ENCODE measurements at regions of chr1 and their contacts with region 1.

Region 1: DNA sequence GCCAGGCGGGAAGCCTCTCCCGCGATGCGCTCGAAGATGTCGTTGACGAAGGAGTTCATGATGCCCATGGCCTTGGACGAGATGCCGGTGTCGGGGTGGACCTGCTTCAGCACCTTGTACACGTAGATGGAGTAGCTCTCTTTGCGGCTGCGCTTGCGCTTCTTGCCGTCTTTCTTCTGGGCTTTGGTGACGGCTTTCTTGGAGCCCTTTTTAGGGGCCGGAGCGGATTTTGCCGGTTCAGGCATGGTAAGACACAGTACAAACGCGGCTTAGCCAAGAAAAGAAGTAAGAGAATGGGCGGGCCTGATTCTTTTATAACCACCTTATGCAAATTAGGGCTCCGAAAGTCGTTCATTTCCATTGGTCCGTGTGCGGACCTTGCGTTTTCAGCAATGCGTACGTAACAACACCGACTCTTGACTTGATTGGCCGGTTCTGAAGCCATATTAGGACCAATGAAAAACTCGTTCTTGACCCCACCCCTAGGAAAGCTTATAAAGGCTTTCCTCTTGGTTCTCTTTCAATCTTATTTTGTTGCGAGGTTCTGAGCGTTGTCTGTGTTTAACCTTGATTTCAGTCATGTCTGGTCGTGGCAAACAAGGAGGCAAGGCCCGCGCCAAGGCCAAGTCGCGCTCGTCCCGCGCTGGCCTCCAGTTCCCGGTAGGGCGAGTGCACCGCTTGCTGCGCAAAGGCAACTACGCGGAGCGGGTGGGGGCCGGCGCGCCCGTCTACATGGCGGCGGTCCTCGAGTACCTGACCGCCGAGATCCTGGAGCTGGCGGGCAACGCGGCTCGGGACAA is 12.8 kb upstream of the BOLA1 start:
- DNase-seq: peak; percentile 99
- H3K4me3 ChIP-seq: peak overlapping the region; percentile 58 to 68 (median 66)
- H3K27ac ChIP-seq: peak overlapping the region; percentile 75
- H3K4me1 ChIP-seq: peaks cover 14% of the 10 kb centered on the region
- H3K27me3 ChIP-seq: no peaks in the 10 kb centered on the region
- CTCF ChIP-seq: no peak

Region 2: GRCh38 chr1:149927503-149928387 is 41.1 kb after region 1 on chr1 and contains the start of gene SF3B4:
- CTCF ChIA-PET with region 1: no interaction called
- dilution Hi-C with region 1: no loop called
- in situ Hi-C with region 1: no loop called
- intact Hi-C with region 1: loop called (anchors 1 kb)
- DNase-seq: peak; percentile 91
- H3K4me3 ChIP-seq: peak within 1 kb of the TSS; percentile 78 to 92 (median 92)
- H3K27ac ChIP-seq: peak within 1 kb of the TSS; percentile 88
- H3K4me1 ChIP-seq: peaks cover 32% of the 10 kb centered on the region
- H3K27me3 ChIP-seq: no peaks in the 10 kb centered on the region
- CTCF ChIP-seq: no peak
- total RNA-seq, gene SF3B4: 14.2 to 68.8 TPM

Region 3: DNA sequence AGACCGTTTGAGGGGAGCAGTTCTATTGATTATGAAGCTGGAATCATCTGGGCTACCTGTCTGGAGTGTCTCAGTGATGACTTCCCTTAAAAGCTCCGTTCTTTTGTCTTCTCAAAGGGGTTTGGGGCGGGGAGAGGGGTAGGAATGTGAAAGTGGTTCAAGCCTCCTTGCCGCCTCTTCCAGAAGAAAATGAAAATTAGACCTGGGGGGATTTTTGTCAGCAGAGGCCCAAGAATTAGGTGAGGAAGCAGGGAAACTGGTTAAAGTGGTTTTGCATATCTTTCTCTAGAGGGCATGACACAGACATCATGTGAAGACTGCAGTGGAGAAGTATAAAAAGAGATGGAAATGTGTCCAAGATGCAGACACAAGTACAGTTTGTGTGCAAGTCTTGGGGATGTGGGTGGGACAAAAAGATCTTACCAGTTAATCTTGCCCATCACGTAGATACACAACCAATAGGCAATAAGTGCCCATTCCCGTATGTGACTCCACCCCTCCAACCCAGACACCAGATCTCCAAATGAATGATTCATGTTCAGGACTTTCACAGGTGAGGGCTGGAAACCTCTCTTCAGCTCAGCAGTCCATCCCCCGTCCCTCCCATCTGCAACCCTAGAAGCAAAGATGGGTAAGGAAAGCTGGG is 50.6 kb after region 1 on chr1:
- CTCF ChIA-PET with region 1: no interaction called
- dilution Hi-C with region 1: no loop called
- in situ Hi-C with region 1: no loop called
- intact Hi-C with region 1: loop called (anchors 1 kb)
- DNase-seq: peak; percentile 95
- H3K4me3 ChIP-seq: peak overlapping the region; percentile 55 to 88 (median 57)
- H3K27ac ChIP-seq: peak overlapping the region; percentile 74
- H3K4me1 ChIP-seq: peaks cover 35% of the 10 kb centered on the region
- H3K27me3 ChIP-seq: no peaks in the 10 kb centered on the region
- CTCF ChIP-seq: peak in 1 of 2 donors; percentile 21

Region 4: DNA sequence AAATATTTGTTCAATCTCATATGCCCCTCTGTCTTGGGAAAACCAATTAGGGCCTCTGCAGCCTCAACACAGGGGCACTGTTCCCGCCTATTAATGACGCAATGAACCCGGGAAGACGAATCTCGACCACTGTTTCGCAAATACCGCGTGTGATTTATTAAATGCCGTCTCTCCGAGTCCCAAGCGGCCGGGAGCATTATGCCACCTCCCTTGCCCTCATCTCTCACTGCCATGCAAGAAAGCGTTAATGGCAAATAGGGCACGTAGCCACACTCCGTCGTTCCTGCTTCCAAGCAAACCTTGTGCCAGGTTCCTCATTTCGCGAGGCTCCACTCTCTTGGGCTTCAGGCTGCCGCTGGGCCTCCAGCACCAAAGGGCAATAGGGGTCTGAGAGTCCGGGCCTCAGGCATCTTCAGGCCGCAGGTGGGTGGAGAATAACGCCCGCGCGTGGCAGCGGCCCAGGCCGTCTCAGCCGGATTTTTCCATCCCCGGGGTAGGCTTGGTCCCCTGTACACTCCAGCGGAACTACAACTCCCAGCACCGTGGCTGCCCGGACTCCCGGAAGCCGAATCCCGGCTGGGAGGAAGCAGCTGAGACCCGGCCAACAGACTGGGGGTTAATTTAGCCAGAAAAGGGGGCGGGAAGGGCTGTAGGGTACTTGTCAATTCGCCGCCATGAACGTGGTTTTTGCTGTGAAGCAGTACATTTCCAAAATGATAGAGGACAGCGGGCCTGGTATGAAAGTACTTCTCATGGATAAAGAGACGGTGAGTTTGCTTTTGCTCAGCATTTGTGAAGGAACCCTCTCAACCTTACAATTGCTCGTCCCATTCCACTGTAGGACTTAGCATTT is 180.8 kb after region 1 on chr1 and contains the start of gene VPS45:
- CTCF ChIA-PET with region 1: no interaction called
- dilution Hi-C with region 1: loop called (anchors 25 kb)
- in situ Hi-C with region 1: no loop called
- intact Hi-C with region 1: no loop called
- DNase-seq: peak; percentile 86
- H3K4me3 ChIP-seq: peak within 1 kb of the TSS; percentile 68 to 81 (median 73)
- H3K27ac ChIP-seq: peak within 1 kb of the TSS; percentile 83
- H3K4me1 ChIP-seq: peaks cover 15% of the 10 kb centered on the region
- H3K27me3 ChIP-seq: no peaks in the 10 kb centered on the region
- CTCF ChIP-seq: no peak
- total RNA-seq, gene VPS45: 30.0 to 42.2 TPM